Endothelial cell of umbilical vein (primary cell): ENCODE measurements at regions of chr1 and their contacts with region 1.

Region 1: DNA sequence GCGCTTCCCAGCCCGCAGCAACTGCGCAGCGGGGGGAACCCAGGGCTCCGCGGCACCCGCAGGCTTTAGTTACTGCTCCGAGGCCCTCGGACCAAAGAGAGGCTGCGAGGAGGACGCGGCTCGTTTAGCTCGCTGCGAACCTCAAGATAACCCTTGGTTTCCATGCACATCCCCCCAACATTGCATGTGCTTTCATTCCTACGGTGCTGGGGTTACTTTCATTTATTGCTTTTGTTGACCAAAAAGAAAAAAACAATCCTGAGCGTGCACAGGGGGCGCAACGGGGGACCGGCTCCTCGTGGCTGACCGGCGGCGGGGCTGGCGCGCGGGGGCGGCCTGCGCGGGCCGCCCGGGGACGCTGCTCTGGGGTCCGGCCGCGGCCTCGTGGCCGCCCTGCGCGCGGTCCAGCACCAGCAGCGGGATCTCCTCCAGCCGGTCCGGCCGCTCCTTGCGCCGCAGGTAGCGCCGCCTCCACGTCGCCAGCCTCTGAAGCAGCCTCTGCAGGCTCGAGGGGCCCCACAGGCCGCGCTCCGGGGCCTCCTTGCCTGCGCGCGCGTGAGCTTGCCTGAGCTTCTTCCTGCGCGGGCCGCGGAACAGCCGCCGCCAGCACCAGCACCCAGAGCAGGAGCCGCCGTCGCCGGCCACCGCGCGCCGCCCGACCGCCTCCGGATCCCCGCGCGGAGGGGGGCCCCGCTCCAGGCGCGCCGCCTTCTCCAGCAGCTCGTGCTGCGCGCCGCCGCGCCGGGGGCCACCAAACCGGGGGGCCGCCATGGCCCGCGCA is 77.4 kb downstream of the DESI2 start:
- DNase-seq: peak; percentile 49
- H3K4me3 ChIP-seq: peak overlapping the region; percentile 46 to 67 (median 61)
- H3K27ac ChIP-seq: no peak overlapping the region
- H3K4me1 ChIP-seq: peaks cover 8% of the 10 kb centered on the region
- H3K27me3 ChIP-seq: no peaks in the 10 kb centered on the region
- CTCF ChIP-seq: no peak
- POLR2A ChIP-seq: no peak

Region 2: DNA sequence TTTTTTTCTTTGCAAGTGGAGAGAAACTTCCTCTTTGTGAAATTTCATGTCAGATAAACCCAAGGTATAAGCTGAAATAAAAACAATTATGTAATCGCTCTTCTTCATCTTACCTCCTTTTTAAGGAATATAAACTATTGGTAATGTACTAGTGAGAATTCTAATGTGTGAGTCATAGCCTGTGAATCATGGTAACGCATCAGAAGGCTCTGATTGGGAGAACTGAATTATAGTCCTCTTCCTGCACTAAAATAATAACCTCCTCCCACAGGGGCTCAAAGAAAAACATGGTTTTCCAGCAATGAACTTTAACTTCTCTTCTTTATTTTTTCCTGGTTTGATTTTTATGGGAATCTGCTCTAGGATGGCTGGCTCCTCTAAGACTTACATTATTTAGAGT is 48.0 kb after region 1 on chr1:
- CTCF ChIA-PET with region 1: no interaction called
- POLR2A ChIA-PET with region 1: no interaction called
- dilution Hi-C with region 1: no loop called
- intact Hi-C with region 1: loop called (anchors 1 kb)
- DNase-seq: peak; percentile 87
- H3K4me3 ChIP-seq: no peak overlapping the region
- H3K27ac ChIP-seq: peak overlapping the region; percentile 14
- H3K4me1 ChIP-seq: peaks cover 10% of the 10 kb centered on the region
- H3K27me3 ChIP-seq: no peaks in the 10 kb centered on the region
- CTCF ChIP-seq: no peak
- POLR2A ChIP-seq: no peak